ENCODE measurements at regions of chr11 and their contacts with region 1.

Region 1: DNA sequence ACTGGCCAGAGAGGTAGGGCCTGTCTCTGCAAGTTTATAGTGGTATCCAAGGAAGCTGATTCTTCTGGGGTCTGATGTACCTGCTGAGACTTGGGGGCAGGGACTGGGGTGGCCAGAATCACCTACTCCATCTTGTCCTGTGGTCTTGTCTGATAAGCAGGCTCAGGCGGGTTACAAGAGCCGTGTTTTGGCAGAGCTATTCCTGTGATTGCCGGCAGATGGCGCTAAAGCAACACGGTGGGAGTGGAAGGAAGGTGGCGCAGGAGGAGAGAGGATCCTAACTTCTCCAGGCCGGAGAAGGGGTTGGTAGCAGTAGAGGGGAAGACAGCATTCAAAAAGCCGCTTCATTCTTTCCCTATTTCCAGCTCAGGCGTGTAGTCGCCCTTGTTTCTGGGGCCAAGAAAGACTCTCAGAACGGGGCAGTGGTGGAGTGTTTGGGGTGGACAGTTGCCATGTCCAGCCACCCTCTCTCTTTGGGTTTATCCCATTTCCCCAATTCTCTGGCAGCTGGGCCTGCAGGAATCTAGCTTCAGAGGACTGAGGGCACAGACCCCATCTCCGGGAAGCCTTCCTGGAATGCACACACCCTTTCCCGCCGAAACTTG is 15.1 kb downstream of the CHRM1 start:
- DNase-seq: peak; percentile 93
- H3K4me3 ChIP-seq: no peak overlapping the region
- H3K27ac ChIP-seq: no peak overlapping the region
- H3K4me1 ChIP-seq: peaks cover 8% of the 10 kb centered on the region
- H3K27me3 ChIP-seq: no peaks in the 10 kb centered on the region
- CTCF ChIP-seq: peak; percentile 100

Region 2: GRCh38 chr11:62922658-62923431 is 16.8 kb after region 1 on chr11:
- CTCF ChIA-PET with region 1: interaction called, 12 read pairs
- POLR2A ChIA-PET with region 1: no interaction called
- intact Hi-C with region 1: no loop called
- DNase-seq: peak; percentile 65
- H3K4me3 ChIP-seq: peak overlapping the region; percentile 32
- H3K27ac ChIP-seq: no peak overlapping the region
- H3K4me1 ChIP-seq: peaks cover 28% of the 10 kb centered on the region
- H3K27me3 ChIP-seq: no peaks in the 10 kb centered on the region
- CTCF ChIP-seq: peak; percentile 67

Region 3: DNA sequence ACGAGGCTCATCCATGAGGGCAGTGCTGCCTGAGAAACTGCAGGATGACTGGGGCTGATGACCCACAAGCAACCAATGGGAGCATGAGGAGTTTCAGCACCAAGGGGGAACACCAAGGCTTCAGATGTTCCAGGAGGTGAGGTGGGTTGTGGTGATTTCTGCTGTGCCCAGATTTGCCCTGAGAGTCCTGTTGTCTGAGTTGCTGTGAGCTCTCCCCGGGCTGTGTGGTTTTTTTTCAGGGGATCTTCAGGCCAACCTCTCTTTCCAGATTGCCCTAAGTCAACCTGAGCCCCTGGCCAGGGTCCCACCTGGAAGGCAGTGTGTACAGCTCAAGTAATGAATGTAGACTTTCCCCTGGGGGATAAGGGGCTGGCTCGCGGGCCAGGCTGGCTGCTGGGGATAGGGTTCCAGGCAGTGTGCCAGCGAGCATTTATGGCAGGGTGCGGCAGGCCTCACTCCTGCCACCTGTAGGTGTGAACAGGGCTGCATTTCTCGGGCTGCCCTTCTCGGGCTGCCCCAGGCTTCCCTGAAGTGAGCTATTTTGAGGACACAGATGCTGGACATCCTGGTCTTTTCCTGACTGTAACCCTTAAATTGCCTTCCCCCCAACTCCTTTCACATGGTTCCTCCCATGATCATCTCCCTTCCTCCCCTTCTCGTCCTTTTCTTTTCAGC is 69.0 kb after region 1 on chr11:
- CTCF ChIA-PET with region 1: interaction called, 49 read pairs
- POLR2A ChIA-PET with region 1: no interaction called
- intact Hi-C with region 1: loop called (anchors 1 kb)
- DNase-seq: peak; percentile 89
- H3K4me3 ChIP-seq: no peak overlapping the region
- H3K27ac ChIP-seq: no peak overlapping the region
- H3K4me1 ChIP-seq: peaks cover 10% of the 10 kb centered on the region
- H3K27me3 ChIP-seq: peaks cover 6% of the 10 kb centered on the region
- CTCF ChIP-seq: peak; percentile 83

Region 4: GRCh38 chr11:63023841-63024648 is 118.0 kb after region 1 on chr11:
- CTCF ChIA-PET with region 1: interaction called, 101 read pairs
- POLR2A ChIA-PET with region 1: no interaction called
- intact Hi-C with region 1: loop called (anchors 1 kb)
- DNase-seq: peak; percentile 91
- H3K4me3 ChIP-seq: no peak overlapping the region
- H3K27ac ChIP-seq: no peak overlapping the region
- H3K4me1 ChIP-seq: peaks cover 4% of the 10 kb centered on the region
- H3K27me3 ChIP-seq: no peaks in the 10 kb centered on the region
- CTCF ChIP-seq: peak; percentile 100

Region 5: DNA sequence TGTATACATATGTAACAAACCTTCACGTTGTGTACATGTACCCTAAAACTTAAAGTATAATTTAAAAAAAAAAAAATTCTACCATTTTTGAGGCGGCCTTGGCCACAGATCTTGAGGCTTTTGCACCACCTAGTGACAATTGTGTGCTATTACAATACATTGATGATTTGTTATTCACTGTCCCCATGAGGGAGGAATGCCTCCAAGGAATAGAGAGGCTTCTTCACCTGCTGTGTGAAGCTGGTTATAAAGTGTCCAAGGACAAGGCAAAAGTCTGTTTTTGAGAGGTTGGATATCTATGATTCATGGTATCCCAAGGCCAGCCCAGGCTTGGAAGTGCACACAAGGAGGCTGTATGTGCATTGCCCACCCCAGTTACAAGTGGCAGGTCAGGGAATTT is 306.7 kb after region 1 on chr11:
- CTCF ChIA-PET with region 1: interaction called, 5 read pairs
- POLR2A ChIA-PET with region 1: no interaction called
- intact Hi-C with region 1: loop called (anchors 2 kb)
- DNase-seq: peak; percentile 66
- H3K4me3 ChIP-seq: no peak overlapping the region
- H3K27ac ChIP-seq: no peak overlapping the region
- H3K4me1 ChIP-seq: no peaks in the 10 kb centered on the region
- H3K27me3 ChIP-seq: no peaks in the 10 kb centered on the region
- CTCF ChIP-seq: peak; percentile 76

Measured in A673 (cell line).